ENCODE measurements at regions of chr10 and their contacts with region 1.

Region 1: GRCh38 chr10:3902054-3902808 is 117.2 kb upstream of the KLF6 start:
- DNase-seq: peak; percentile 93
- ATAC-seq: peak; percentile 95
- H3K4me3 ChIP-seq: no peak overlapping the region; the same call in 1 of the 2 replicates
- H3K27ac ChIP-seq: peak overlapping the region; percentile 75
- H3K4me1 ChIP-seq: peaks cover 25% of the 10 kb centered on the region
- H3K27me3 ChIP-seq: no peaks in the 10 kb centered on the region
- CTCF ChIP-seq: peak; percentile 18 to 38 (median 25); a peak in 4 of 6 replicates
- EP300 ChIP-seq: peak; percentile 99; a peak in 3 of 4 replicates
- POLR2A ChIP-seq: no peak
- RAD21 ChIP-seq: peak; percentile 70

Region 2: DNA sequence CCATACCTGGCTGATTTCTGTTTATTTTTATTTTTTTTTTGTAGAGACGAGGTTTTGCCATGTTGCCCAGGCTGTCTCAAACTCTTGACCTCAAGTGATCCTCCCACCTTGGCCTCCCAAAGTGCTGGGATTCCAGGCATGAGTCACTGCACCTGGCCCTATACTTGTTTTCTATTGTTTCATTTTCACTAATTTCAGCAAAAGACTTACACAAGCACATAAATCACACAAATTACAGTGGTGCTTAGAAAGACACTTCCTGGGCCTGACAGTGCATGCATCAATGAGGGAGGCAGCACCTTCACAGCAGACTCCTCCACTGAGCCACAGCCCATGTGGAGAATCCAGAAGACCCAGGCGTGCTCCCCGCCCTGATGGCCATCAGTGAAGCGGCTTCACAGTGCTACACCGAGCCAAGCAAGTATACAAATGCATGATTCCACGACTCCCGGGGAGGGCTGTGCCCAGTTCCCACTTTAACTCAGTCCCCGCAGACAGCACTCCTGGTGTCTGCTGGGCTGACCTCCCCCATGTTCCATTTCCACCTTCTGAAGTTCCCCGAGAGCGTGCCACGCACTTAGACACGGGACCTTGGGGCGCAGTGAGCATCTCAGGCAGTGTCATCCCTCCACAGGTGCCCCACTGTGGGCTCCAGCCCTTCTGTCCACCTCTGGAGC is 750.2 kb before region 1 on chr10:
- CTCF ChIA-PET with region 1: no interaction called
- POLR2A ChIA-PET with region 1: no interaction called
- RAD21 ChIA-PET with region 1: no interaction called
- SMC1A ChIA-PET with region 1: no interaction called
- in situ Hi-C with region 1: no loop called
- intact Hi-C with region 1: no loop called
- DNase-seq: no peak
- ATAC-seq: no peak
- H3K4me3 ChIP-seq: no peak overlapping the region
- H3K27ac ChIP-seq: no peak overlapping the region
- H3K4me1 ChIP-seq: no peaks in the 10 kb centered on the region
- H3K27me3 ChIP-seq: no peaks in the 10 kb centered on the region
- CTCF ChIP-seq: no peak
- EP300 ChIP-seq: no peak
- POLR2A ChIP-seq: no peak
- RAD21 ChIP-seq: no peak

Region 3: DNA sequence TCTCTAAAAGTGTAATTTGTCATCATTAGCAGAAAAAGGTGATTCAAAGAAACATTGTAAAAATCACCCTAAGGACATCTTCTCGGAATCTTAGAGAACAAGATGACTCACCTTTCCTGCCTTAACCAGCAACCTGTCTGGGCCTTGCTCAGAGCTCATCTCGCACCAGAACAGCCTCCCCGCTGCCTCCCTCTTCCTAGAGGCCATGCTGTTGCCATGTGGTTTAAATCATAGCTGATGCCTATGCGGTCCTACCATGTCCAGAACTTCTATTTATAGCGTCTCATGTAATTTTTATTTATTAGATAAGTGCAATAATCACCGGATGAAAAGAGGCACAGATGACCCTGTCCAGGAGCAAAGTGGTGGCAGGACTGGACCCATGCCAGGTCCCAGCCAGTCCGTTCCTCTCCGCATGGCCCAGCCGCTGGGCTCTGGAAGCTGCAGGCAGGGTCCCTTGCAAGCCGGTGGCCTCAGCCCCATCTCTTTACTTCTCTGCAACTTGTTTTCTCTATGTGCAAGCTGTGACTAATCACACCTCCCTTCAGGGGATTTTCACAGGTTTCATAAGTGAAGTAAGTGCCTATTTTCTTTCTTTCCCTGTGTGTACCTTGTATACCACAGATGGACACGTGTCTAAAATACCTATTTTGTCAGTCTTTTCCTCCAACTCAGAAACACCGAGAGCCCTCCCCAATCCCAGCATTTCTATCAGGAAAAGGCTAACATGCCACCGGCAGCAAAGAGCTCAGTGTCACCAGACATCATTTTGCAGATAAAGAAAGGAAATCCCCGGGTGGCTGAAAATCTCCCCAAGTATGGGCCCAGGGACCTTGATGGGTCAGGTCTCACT is 144.4 kb before region 1 on chr10:
- CTCF ChIA-PET with region 1: interaction called, 3 read pairs
- POLR2A ChIA-PET with region 1: no interaction called
- RAD21 ChIA-PET with region 1: interaction called, 4 read pairs
- SMC1A ChIA-PET with region 1: interaction called, 3 read pairs
- in situ Hi-C with region 1: no loop called
- intact Hi-C with region 1: loop called (anchors 1 kb)
- DNase-seq: peak; percentile 82
- ATAC-seq: peak; percentile 88
- H3K4me3 ChIP-seq: no peak overlapping the region; the same call in 1 of the 2 replicates
- H3K27ac ChIP-seq: peak overlapping the region; percentile 76
- H3K4me1 ChIP-seq: peaks cover 35% of the 10 kb centered on the region
- H3K27me3 ChIP-seq: no peaks in the 10 kb centered on the region
- CTCF ChIP-seq: no peak
- EP300 ChIP-seq: peak; percentile 65 to 81; a peak in 3 of 4 replicates
- POLR2A ChIP-seq: peak; percentile 44; the same call in 1 of the 2 replicates
- RAD21 ChIP-seq: peak; percentile 9; the same call in 1 of the 2 replicates

Region 4: GRCh38 chr10:3811291-3811870 is 90.8 kb before region 1 on chr10:
- CTCF ChIA-PET with region 1: interaction called, 3 read pairs
- POLR2A ChIA-PET with region 1: no interaction called
- RAD21 ChIA-PET with region 1: interaction called, 6 read pairs
- SMC1A ChIA-PET with region 1: interaction called, 13 read pairs
- in situ Hi-C with region 1: no loop called
- intact Hi-C with region 1: loop called (anchors 1 kb)
- DNase-seq: peak; percentile 76
- ATAC-seq: peak; percentile 87
- H3K4me3 ChIP-seq: peak overlapping the region; percentile 55; the same call in 1 of the 2 replicates
- H3K27ac ChIP-seq: peak overlapping the region; percentile 82
- H3K4me1 ChIP-seq: peaks cover 42% of the 10 kb centered on the region
- H3K27me3 ChIP-seq: no peaks in the 10 kb centered on the region
- CTCF ChIP-seq: no peak
- EP300 ChIP-seq: peak; percentile 62 to 69; a peak in 3 of 4 replicates
- POLR2A ChIP-seq: peak; percentile 24; the same call in 1 of the 2 replicates
- RAD21 ChIP-seq: peak; percentile 26; the same call in 1 of the 2 replicates

Region 5: DNA sequence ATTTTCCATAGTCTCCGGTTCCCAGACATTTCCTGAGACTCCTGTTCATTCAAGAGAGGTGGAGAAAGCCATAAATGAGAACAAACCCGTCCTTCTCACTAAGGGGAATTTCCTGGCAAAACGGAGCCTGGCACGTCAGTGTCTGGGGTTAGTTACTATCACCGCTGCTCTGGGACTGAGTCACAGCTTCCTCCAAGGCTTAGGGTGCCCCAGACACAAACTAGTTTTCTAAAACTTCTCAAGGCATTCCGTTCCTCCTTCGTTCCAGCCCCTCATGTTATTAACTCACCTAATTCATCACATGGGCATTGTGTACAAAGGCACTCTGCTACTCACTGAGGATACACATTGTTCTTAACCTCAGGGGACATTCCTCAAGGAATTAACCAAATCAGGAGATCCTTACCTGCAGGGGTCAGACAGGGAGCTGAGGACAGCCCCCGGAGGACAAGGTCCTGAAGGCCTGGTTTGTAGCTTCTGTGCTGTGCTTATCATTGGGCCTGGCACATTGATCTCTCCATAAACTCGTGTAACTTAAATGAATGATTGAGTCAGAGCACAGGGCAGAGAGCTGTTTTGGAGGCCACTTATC is 14.2 kb before region 1 on chr10:
- CTCF ChIA-PET with region 1: interaction called, 11 read pairs
- POLR2A ChIA-PET with region 1: interaction called, 10 read pairs
- RAD21 ChIA-PET with region 1: interaction called, 15 read pairs
- SMC1A ChIA-PET with region 1: interaction called, 48 read pairs
- in situ Hi-C with region 1: no loop called
- intact Hi-C with region 1: no loop called
- DNase-seq: peak; percentile 66
- ATAC-seq: peak; percentile 92
- H3K4me3 ChIP-seq: no peak overlapping the region
- H3K27ac ChIP-seq: peak overlapping the region; percentile 67
- H3K4me1 ChIP-seq: peaks cover 15% of the 10 kb centered on the region
- H3K27me3 ChIP-seq: no peaks in the 10 kb centered on the region
- CTCF ChIP-seq: no peak
- EP300 ChIP-seq: peak in 1 of 2 experiments; percentile 54; a peak in 2 of 4 replicates
- POLR2A ChIP-seq: no peak
- RAD21 ChIP-seq: 0 out of 2 replicates have a peak, but pooled peaks have one; percentile 0

Measured in GM12878 (cell line).